Heart right ventricle (tissue), 16 donors: ENCODE measurements at regions of chr1 and their contacts with region 1.

Region 1: GRCh38 chr1:196535727-196536126 is 72.5 kb downstream of the KCNT2 start:
- DNase-seq: no peak
- ATAC-seq: peak in 1 of 8 donors; percentile 30
- H3K4me3 ChIP-seq: no peak overlapping the region
- H3K27ac ChIP-seq: no peak overlapping the region
- H3K4me1 ChIP-seq: peaks cover 0 to 4% (median 0%) of the 10 kb centered on the region in 9 donors
- H3K27me3 ChIP-seq: no peaks in the 10 kb centered on the region
- CTCF ChIP-seq: no peak

Region 2: DNA sequence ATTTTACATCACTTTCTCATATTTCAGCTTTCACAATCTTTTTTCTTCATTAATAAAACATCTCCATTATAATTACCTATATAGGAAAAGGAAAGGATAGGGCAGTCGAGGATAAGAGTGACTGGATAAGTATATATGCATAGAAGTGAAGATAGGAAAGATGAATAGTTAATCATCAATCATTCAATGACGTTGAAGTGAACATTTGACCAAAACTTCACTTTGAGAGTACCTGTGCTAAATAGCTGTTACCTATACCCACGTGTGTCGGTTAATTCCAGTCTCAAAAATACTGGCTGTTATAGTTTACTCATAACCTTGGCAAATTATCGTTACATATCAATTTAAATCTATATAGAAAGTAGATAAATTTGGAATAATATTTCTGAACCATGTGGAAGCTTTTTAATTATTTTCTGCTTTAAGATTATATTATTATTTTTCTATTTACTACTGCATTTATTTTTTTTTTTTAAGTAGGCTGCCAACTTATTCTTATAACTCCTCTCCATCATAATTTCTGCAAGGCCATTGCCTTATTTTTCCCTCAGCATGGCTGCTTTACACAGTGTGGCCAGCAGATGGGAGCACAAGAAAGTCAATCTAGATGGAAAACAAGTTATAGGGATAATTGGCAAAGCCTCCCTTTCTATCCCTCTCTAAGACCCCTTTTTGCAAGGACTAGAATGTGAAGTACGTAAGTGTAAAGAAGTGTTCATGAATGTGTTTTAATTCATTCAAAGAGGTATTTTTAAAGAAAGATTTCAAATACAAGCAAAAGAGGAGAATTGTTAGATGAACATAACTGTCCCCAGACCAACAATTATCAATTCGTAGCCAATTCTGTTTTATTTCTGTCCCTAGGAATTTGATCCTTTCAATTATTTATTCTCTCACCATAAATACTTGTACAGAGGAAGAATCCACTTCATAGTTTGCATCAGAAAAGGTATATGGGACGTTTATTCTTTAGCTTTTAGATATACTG is 217.9 kb before region 1 on chr1:
- intact Hi-C with region 1: no loop called
- DNase-seq: peak in 1 of 2 donors; percentile 7
- ATAC-seq: no peak
- H3K4me3 ChIP-seq: no peak overlapping the region
- H3K27ac ChIP-seq: no peak overlapping the region
- H3K4me1 ChIP-seq: no peaks in the 10 kb centered on the region
- H3K27me3 ChIP-seq: no peaks in the 10 kb centered on the region
- CTCF ChIP-seq: peak in 7 of 9 donors; percentile 32 to 63 (median 53)

Region 3: DNA sequence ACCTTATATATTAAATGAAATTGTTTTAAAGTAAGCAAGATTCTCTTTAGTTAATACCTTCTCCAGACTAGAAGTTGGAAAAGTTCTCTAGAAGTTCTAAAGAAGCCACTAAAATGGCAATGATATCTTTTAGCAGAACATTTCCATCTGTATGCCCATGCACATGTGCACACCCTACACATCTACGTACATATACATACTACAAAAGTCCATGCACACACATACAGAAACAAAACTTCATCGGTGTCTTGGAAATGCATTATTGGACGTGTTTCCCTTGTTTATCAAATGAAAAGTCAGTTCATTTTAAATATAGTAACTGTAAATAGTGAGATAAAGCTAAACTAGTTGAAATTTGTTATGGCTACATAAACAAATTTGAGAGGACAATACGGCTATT is 41.8 kb before region 1 on chr1:
- intact Hi-C with region 1: loop called in 1 of 10 experiments (anchors 2 kb)
- DNase-seq: no peak
- ATAC-seq: no peak
- H3K4me3 ChIP-seq: no peak overlapping the region
- H3K27ac ChIP-seq: no peak overlapping the region
- H3K4me1 ChIP-seq: no peaks in the 10 kb centered on the region
- H3K27me3 ChIP-seq: no peaks in the 10 kb centered on the region
- CTCF ChIP-seq: no peak